ENCODE measurements at regions of chr1 and their contacts with region 1.

Region 1: DNA sequence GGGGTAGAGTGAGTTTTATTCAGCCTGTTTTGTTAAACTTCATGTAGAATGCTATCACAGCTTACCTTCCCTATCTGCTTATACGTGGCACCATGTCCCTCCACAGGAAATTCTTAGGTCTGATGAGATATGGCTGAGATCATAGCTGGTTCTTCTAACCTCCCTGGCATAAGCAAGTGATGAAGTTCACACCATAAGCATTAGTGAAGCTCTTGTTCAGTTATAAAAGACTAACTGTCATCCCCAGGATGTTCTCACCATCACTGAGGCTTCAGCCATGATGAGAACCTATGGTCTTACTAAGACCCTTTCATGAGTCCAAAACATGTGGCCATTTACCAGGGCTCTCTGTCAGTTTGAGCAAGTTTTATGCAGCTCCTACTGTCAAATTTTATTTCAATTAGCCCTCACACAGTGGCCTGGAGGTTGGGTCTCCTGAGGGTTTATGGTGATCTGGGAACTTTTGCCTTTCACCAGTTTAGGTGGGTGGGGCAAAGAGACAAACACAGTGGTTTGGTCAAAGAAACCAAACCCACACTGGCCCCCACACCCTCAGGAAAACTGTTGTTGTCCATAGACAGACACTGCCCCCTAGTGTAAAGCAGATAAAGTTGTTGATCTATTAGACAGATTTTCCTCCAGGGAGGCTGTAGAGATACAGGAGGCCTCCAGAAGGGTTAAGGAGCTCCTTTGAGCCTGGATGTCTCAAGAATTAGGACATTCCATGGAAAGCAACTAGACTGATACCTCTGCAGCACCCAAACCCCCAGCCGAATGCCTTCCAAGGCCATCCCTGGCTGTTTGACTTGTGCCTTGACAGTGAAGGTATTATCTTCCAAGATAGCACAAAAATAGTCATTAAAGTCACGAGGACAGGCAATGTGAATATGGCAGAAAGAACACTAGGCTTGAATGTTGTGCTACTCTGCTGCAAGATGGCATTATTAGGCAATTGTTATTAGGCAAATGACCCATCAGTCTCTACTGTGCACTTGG is 5.0 kb downstream of the SLC22A15 start:
- DNase-seq: no peak
- H3K4me3 ChIP-seq: no peak overlapping the region
- H3K27ac ChIP-seq: no peak overlapping the region
- H3K4me1 ChIP-seq: peaks cover 0 to 19% (median 9%) of the 10 kb centered on the region in 4 experiments; a peak in 5 of 7 replicates
- H3K27me3 ChIP-seq: no peaks in the 10 kb centered on the region
- CTCF ChIP-seq: peak; percentile 16 to 82 (median 70)
- EP300 ChIP-seq: no peak
- POLR2A ChIP-seq: no peak
- RAD21 ChIP-seq: peak; percentile 95 to 96

Region 2: DNA sequence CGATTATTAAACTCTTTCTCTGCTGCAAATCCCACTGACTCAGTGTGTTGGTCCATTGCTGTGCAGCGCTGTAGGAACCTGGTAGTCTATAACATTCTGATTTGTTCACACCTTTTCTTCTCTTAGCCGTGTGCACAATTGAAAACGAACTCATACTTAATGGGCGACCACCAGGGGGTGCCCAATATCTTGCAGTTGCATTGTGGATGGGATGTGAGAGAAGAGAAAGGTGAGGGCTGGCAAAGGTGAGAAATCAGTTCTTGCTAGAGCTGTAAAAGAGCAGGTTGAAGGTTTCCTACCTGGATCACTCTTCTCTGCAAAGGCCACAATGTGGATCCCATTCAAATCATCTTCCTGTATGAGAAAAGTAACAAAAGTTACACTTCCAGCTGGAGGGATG is 263.8 kb before region 1 on chr1:
- CTCF ChIA-PET with region 1: interaction called, 19 read pairs
- POLR2A ChIA-PET with region 1: no interaction called
- DNase-seq: peak in 1 of 2 experiments; percentile 81
- H3K4me3 ChIP-seq: no peak overlapping the region
- H3K27ac ChIP-seq: no peak overlapping the region
- H3K4me1 ChIP-seq: peaks cover 0 to 4% (median 0%) of the 10 kb centered on the region in 4 experiments; a peak in 3 of 7 replicates
- H3K27me3 ChIP-seq: no peaks in the 10 kb centered on the region
- CTCF ChIP-seq: peak; percentile 35 to 83 (median 68)
- EP300 ChIP-seq: no peak
- POLR2A ChIP-seq: no peak
- RAD21 ChIP-seq: peak; percentile 85 to 92

Region 3: DNA sequence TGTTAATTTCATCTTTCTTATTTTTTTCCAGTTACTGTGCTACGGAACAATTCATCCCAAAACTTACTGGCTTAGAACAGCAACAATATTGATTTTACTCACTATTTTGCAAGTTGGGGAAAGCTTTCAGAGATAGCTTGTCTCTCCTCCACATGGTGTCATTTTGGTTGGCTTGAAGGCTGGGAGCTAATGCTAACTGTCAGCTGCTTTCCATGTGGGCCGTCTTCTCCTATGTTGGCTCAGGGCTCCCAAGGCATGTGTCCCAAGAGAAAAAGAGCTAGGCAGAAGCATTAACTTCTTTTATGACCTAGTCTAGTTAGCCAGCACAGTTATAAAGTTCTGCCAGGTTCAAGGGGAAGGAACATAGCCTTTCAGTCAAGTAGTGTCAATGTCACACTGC is 178.9 kb before region 1 on chr1:
- CTCF ChIA-PET with region 1: interaction called, 14 read pairs
- POLR2A ChIA-PET with region 1: no interaction called
- DNase-seq: no peak
- H3K4me3 ChIP-seq: no peak overlapping the region
- H3K27ac ChIP-seq: no peak overlapping the region
- H3K4me1 ChIP-seq: peaks cover 0 to 6% (median under 1%) of the 10 kb centered on the region in 4 experiments; a peak in 1 of 7 replicates
- H3K27me3 ChIP-seq: no peaks in the 10 kb centered on the region
- CTCF ChIP-seq: no peak
- EP300 ChIP-seq: no peak
- POLR2A ChIP-seq: no peak
- RAD21 ChIP-seq: no peak

Region 4: GRCh38 chr1:115813727-115814126 is 167.6 kb before region 1 on chr1:
- CTCF ChIA-PET with region 1: interaction called, 27 read pairs
- POLR2A ChIA-PET with region 1: no interaction called
- DNase-seq: no peak
- H3K4me3 ChIP-seq: no peak overlapping the region
- H3K27ac ChIP-seq: no peak overlapping the region
- H3K4me1 ChIP-seq: no peaks in the 10 kb centered on the region
- H3K27me3 ChIP-seq: no peaks in the 10 kb centered on the region
- CTCF ChIP-seq: no peak
- EP300 ChIP-seq: no peak
- POLR2A ChIP-seq: no peak
- RAD21 ChIP-seq: no peak

Region 5: GRCh38 chr1:115833856-115834255 is 147.4 kb before region 1 on chr1:
- CTCF ChIA-PET with region 1: interaction called, 25 read pairs
- POLR2A ChIA-PET with region 1: interaction called, 3 read pairs
- DNase-seq: no peak
- H3K4me3 ChIP-seq: no peak overlapping the region
- H3K27ac ChIP-seq: no peak overlapping the region
- H3K4me1 ChIP-seq: peaks cover 5 to 9% (median 6%) of the 10 kb centered on the region in 4 experiments; a peak in 5 of 7 replicates
- H3K27me3 ChIP-seq: peaks cover 0 to 19% (median 14%) of the 10 kb centered on the region in 4 experiments; a peak in 6 of 7 replicates
- CTCF ChIP-seq: peak in 2 of 3 experiments; percentile 55 to 59; a peak in 3 of 4 replicates
- EP300 ChIP-seq: no peak
- POLR2A ChIP-seq: no peak
- RAD21 ChIP-seq: peak; percentile 49 to 58

Region 6: DNA sequence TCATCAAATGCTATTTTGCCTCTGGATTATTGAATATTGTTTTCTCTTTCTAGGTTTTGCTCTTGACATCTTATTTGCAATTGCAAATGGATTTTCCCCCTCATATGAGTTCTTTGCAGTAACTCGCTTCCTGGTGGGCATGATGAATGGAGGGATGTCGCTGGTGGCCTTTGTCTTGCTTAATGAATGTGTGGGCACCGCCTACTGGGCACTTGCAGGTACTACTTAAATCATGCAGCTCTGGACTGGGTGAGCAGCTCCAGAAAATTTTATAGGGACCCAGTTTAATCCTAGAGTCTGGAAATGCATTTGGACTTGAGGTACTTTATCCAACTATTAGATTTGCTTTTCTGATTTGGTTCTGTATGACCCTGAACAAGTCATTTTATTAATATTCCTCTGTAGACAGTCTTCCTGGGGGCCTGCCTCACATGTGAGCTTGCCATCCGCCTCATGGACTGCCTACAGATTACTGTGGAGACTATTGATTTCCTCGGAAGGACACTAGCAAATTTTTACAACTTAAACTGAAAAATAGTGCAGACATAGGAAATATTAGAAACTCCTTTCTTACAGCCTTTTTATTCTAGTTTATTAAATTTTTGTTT is 39.5 kb after region 1 on chr1:
- CTCF ChIA-PET with region 1: interaction called, 14 read pairs
- POLR2A ChIA-PET with region 1: no interaction called
- DNase-seq: peak; percentile 33 to 63
- H3K4me3 ChIP-seq: no peak overlapping the region
- H3K27ac ChIP-seq: no peak overlapping the region
- H3K4me1 ChIP-seq: no peaks in the 10 kb centered on the region
- H3K27me3 ChIP-seq: no peaks in the 10 kb centered on the region
- CTCF ChIP-seq: peak; percentile 55 to 79 (median 70)
- EP300 ChIP-seq: no peak
- POLR2A ChIP-seq: no peak
- RAD21 ChIP-seq: peak; percentile 71 to 72; a peak in 3 of 4 replicates

Region 7: DNA sequence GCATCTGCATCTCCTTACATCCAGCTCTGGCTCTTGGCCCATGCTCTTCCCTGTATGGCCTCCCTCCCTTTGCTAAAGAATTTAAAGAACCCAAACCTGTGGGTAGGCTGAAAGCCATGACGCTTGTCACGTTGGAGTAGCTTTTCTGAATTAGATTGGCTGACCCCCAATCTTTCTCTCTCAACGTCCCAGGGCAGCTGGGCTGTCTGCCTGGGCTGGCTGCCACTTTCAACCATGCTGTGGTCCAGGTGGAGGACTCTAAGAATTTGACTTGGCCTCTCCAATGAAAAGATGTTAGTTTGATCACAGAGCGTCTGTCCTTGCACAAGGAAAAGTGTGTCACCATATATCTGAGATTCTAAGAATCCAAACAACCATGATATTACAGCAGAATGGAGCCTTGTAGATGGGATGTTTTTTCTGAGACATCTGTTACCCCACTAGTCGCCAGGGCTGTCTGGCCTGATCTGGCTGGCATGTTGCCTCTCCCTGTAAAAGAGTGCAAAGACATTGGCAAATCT is 692.8 kb after region 1 on chr1:
- CTCF ChIA-PET with region 1: no interaction called
- POLR2A ChIA-PET with region 1: no interaction called
- DNase-seq: no peak
- H3K4me3 ChIP-seq: no peak overlapping the region
- H3K27ac ChIP-seq: no peak overlapping the region
- H3K4me1 ChIP-seq: no peaks in the 10 kb centered on the region
- H3K27me3 ChIP-seq: no peaks in the 10 kb centered on the region; a peak in 1 of 7 replicates
- CTCF ChIP-seq: no peak
- EP300 ChIP-seq: no peak
- POLR2A ChIP-seq: no peak
- RAD21 ChIP-seq: no peak

Measured in H1 (cell line).